ENCODE measurements at regions of chr5 and their contacts with region 1.

Region 1: GRCh38 chr5:146734936-146735577 is 143.5 kb downstream of the PPP2R2B start:
- DNase-seq: no peak
- H3K4me3 ChIP-seq: no peak overlapping the region
- H3K27ac ChIP-seq: no peak overlapping the region
- H3K27me3 ChIP-seq: no peaks in the 10 kb centered on the region
- CTCF ChIP-seq: no peak

Region 2: DNA sequence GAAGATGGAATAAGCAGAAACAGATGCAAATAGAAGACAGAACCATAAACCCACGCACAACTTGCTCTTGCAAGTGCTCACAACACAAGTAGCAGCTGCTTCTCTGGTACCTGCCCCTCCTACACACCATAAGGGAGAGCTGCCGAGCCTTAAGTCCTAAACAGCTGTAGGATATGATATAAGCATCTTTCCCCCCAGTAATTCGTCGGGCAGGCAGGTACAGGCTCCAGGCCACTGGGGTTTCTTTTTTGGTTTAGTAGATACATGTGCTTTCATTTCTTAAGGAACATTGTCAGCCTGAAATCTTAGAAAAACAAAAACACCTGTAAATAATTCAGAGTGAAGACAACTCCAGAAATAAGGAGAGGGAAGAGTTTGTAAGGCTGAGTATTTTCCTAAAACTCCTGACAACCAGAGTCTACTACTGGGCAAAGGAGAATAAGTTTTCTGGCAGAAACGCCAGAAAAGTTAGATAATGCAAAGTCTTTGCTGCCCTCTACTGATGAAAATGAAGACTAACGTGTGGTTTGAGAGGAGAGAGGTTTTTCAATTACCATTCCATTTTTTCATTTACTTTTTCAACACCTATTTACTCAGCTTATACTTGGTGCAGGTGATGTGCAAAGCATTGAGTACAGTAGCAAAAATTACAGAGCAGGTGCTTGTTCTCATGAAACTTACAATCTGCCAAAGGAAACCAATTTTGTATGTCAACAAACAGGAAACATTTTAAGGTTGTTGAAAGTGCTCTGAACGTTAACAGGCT is 308.0 kb before region 1 on chr5:
- intact Hi-C with region 1: no loop called
- DNase-seq: no peak
- H3K4me3 ChIP-seq: no peak overlapping the region
- H3K27ac ChIP-seq: no peak overlapping the region
- H3K27me3 ChIP-seq: peaks cover 0 to 4% (median 0%) of the 10 kb centered on the region in 45 donors
- CTCF ChIP-seq: peak; percentile 57 to 88 (median 74)

Region 3: GRCh38 chr5:146699664-146700418 is 35.2 kb before region 1 on chr5:
- intact Hi-C with region 1: loop called in 1 of 2 experiments (anchors 5 kb)
- DNase-seq: peak in 2 of 10 donors; percentile 50 to 78
- H3K4me3 ChIP-seq: peak overlapping the region in 1 of 59 donors; percentile 2
- H3K27ac ChIP-seq: peak overlapping the region in 52 of 59 donors; percentile 2 to 76 (median 55)
- H3K27me3 ChIP-seq: no peaks in the 10 kb centered on the region
- CTCF ChIP-seq: no peak